MCF 10A (cell line): ENCODE measurements at regions of chr15 and their contacts with region 1.

Region 1: DNA sequence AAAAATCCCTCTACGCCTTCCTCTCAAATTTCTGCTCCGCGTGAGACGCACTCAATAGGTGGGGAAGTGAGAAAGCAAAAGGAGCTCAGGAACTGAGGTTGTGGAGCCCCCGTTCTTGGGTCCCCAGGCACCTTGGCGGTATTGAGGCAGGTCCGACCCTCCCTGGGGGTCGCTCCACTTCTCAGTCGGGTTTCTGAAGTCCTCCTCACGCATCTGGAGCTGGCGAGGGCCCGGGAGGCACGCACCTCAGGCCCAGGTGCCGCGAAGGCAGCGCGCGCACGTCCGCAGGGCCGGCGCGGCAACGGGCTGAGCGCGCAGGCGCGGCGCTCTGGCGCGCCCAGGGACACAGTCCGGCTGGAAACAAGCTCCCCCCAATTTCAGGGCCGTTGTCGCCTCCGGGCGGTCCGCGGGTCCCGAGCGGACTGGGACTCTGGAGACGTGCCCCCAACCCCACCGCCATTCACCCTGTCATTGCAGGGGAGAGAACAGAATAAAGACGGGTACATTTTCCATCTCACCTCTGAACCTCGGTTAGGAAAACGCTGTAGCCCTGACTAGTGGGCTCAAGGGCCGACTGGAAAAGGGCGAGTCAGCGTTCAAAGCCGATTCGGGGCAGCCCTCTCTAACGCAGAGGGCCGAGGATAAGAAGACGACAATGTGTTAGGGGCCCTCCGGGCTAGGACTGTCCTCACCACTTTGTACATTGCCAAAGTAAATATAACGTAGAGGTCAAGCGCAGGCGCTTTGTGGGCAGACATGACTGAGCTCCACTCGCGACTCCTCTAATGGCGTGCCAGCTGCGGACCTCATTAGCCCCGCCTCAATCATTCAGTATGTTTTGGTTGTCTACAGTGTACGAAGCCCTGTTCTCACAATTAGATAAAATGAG is at the start of gene ZNF770:
- DNase-seq: peak; percentile 69
- H3K4me3 Mint-ChIP-seq: peak within 1 kb of the TSS; percentile 91
- H3K27ac Mint-ChIP-seq: peak within 1 kb of the TSS; percentile 98
- H3K4me1 Mint-ChIP-seq: peaks cover 12% of the 10 kb centered on the region
- H3K27me3 Mint-ChIP-seq: no peaks in the 10 kb centered on the region
- CTCF ChIP-seq: no peak
- total RNA-seq, gene ZNF770: 61.0 and 73.6 TPM in 2 replicates

Region 2: DNA sequence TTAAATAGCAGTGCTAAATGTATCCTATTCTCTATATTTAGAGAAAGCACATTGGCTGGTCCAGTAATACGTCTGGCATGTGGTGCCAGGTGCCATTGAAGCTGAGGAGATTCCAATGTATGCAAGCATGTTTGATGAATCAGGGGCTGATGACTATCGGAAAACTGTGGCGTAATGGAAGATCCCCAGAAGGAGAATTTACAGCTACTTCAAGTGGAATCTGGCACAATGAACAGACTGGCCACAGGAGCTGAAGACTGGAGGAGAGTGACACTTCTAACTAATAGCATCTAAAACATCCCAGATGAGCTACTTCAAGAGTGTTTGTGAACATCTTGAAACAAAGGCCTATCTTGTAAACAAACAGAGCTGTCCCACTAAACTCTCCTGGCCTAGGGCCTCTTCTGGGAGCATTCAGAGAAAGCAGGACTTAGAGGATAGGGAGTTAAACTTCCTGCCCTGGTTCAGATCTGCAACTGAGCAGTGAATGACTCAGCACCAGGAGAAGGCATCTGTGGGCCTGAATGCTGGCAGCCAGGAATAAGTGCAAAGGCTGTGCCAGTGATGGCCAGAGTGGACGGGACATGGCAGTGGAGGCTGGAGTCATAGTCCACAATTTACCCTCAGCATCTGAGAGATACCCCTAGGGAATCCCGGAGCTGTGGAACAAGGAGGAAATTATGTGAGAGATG is 177.6 kb before region 1 on chr15:
- CTCF ChIA-PET with region 1: no interaction called
- POLR2A ChIA-PET with region 1: no interaction called
- intact Hi-C with region 1: no loop called
- DNase-seq: peak; percentile 86
- H3K4me3 Mint-ChIP-seq: peak overlapping the region; percentile 49
- H3K27ac Mint-ChIP-seq: peak overlapping the region; percentile 96
- H3K4me1 Mint-ChIP-seq: peaks cover 26% of the 10 kb centered on the region
- H3K27me3 Mint-ChIP-seq: no peaks in the 10 kb centered on the region
- CTCF ChIP-seq: no peak

Region 3: DNA sequence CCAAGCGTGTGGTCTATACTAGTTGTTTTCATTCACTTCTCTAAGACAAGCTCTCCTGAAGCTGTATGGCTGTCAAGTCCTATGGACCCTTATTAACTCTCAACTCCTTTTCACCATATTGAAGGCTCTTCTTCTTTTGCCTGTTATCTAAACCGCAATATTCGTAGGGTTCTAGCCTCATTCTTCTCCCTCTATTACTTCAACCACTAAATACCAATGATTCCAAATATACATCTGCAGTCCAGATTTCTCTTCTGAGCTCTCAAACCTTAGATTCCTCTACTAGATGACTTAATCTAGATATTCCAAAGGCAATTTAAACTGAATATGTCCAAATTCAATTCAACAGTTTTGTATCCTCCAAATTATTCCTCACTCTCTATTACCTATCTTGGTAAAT is 43.3 kb before region 1 on chr15:
- CTCF ChIA-PET with region 1: no interaction called
- POLR2A ChIA-PET with region 1: no interaction called
- intact Hi-C with region 1: no loop called
- DNase-seq: no peak
- H3K4me3 Mint-ChIP-seq: no peak overlapping the region
- H3K27ac Mint-ChIP-seq: no peak overlapping the region
- H3K4me1 Mint-ChIP-seq: peaks cover 4% of the 10 kb centered on the region
- H3K27me3 Mint-ChIP-seq: no peaks in the 10 kb centered on the region
- CTCF ChIP-seq: no peak

Region 4: DNA sequence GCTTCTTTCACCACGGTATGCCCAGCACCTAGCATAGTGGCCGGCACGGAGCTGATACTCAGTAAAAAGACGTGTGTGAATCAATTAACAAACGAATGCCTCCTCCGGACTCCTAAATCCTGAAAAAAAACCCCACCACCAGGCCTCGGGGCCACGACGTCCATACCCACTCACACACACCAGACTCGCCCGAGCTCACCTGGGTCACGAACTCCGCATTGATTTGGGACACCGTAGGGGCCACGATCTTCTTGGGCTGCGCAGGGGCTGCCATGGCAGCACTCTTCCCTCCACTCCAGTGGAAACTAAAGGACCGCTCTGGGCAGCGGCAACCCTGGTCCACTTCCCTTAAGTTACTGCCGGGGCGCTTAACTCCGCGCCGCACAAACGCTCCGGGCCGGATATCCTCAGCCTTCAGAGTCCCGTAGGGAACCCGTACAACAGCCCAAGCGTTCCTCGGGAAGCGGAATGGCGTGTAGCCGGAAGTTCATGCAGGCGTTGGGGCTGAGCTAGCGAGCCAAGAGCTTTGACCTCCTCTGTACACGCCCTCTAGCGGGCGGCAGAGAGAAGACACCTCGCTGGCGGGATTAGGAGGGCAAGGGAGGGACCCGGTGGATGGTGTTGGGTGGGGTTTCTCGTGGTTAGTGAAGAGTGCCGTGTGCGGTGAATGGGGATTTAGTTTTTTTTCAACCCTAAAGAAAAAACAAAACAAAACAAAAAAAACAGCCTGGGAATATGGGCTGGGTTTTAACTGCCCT is 18.7 kb before region 1 on chr15 and contains the start of gene AQR:
- CTCF ChIA-PET with region 1: interaction called, 13 read pairs
- POLR2A ChIA-PET with region 1: interaction called, 148 read pairs
- intact Hi-C with region 1: no loop called
- DNase-seq: peak; percentile 97
- H3K4me3 Mint-ChIP-seq: peak within 1 kb of the TSS; percentile 99
- H3K27ac Mint-ChIP-seq: peak within 1 kb of the TSS; percentile 99
- H3K4me1 Mint-ChIP-seq: peaks cover 19% of the 10 kb centered on the region
- H3K27me3 Mint-ChIP-seq: no peaks in the 10 kb centered on the region
- CTCF ChIP-seq: no peak
- total RNA-seq, gene AQR: 26.5 and 33.1 TPM in 2 replicates

Region 5: DNA sequence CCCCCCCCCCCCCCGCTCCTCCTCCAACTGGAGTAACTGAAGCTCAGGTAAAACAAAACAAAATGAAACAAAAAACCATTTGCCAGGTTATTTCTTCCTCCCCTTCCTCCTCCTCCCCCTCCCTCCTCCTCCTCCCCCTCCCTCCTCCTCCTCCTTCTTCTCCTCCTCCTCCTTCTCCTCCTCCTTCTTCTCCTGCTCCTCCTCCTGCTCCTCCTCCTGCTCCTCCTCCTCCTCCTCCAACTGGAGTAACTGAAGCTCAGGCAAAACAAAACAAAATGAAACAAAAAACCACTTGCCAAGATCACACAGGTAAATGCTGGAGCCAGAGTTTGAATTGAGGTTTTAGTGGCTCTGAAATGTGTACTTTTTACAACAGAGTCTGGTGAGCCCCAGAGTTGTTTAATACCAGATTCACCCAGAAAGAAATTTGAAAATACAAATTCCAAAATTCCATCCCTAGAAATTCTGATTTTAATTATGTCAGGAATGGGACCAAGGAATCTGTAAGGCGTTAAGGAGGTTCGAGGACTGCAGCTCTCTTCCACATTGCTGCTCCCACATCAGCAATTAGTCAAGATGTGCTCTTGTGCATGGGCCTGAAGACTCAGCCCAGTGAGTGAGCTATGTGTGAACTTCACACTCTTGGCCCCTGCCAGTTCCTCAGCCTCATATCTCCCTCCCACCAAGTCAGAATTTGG is 31.3 kb after region 1 on chr15:
- CTCF ChIA-PET with region 1: interaction called, 4 read pairs
- POLR2A ChIA-PET with region 1: interaction called, 43 read pairs
- intact Hi-C with region 1: no loop called
- DNase-seq: peak; percentile 70
- H3K4me3 Mint-ChIP-seq: peak overlapping the region; percentile 66
- H3K27ac Mint-ChIP-seq: peak overlapping the region; percentile 81
- H3K4me1 Mint-ChIP-seq: peaks cover 16% of the 10 kb centered on the region
- H3K27me3 Mint-ChIP-seq: no peaks in the 10 kb centered on the region
- CTCF ChIP-seq: no peak

Region 6: DNA sequence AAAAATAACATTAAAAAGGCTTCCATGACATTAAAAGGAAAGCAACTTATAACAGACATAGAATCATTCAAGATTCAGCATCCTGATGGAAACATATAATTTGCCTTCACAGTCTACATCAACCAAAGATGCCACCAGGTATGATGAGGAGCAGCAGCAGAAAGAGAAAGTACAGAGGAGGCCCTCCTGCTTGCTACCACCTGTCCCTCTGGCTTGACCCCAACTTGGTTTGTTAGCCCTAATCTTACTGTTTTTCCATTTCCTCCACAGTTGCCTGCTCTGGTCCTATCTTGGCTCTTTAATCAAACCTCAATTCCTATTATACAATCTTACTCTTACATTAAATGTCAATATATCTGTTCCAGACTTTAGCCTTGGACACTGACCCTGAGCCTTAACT is 386.4 kb after region 1 on chr15:
- CTCF ChIA-PET with region 1: no interaction called
- POLR2A ChIA-PET with region 1: no interaction called
- intact Hi-C with region 1: no loop called
- DNase-seq: no peak
- H3K4me3 Mint-ChIP-seq: no peak overlapping the region
- H3K27ac Mint-ChIP-seq: no peak overlapping the region
- H3K4me1 Mint-ChIP-seq: no peaks in the 10 kb centered on the region
- H3K27me3 Mint-ChIP-seq: no peaks in the 10 kb centered on the region
- CTCF ChIP-seq: no peak